ENCODE measurements at regions of chr14 and their contacts with region 1.

Region 1: GRCh38 chr14:68283378-68284123 is 464.0 kb downstream of the RAD51B start:
- DNase-seq: peak; percentile 66
- ATAC-seq: peak; percentile 28
- H3K4me3 Mint-ChIP-seq: no peak overlapping the region
- H3K27ac Mint-ChIP-seq: peak overlapping the region; percentile 72
- H3K4me1 Mint-ChIP-seq: peaks cover 86% of the 10 kb centered on the region
- H3K27me3 Mint-ChIP-seq: no peaks in the 10 kb centered on the region

Region 2: GRCh38 chr14:67933266-67933665 is 350.3 kb before region 1 on chr14:
- CTCF ChIA-PET with region 1: no interaction called
- POLR2A ChIA-PET with region 1: no interaction called
- intact Hi-C with region 1: no loop called
- DNase-seq: no peak
- ATAC-seq: no peak
- H3K4me3 Mint-ChIP-seq: no peak overlapping the region
- H3K27ac Mint-ChIP-seq: no peak overlapping the region
- H3K4me1 Mint-ChIP-seq: peaks cover 5% of the 10 kb centered on the region
- H3K27me3 Mint-ChIP-seq: no peaks in the 10 kb centered on the region

Region 3: DNA sequence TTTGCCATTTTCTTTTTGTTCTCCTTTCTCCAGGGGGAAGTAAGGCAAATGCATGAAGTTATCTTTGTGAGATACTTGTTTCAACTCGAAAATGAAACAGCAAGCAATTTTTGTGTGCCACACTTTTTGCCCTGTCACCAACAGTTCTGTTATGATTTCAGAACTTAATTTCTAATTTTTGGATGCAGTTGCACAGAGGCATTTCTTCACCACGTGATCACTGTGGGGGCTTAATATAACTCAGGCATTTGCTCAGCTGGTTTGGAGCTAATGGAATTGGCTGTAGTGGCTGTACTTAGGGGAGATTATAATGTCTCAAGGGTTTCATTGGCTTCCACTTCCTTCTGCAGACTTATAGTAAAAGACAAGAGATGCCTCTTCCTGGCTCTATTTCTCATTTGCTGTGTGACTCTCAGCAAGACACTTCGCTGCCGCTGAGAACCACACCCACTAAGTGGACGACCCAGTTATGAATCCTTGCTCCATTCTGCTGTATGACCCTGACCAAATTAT is 11.6 kb before region 1 on chr14:
- CTCF ChIA-PET with region 1: interaction called, 7 read pairs
- POLR2A ChIA-PET with region 1: interaction called, 3 read pairs
- intact Hi-C with region 1: loop called in 1 of 2 experiments (anchors 1 kb)
- DNase-seq: no peak
- ATAC-seq: no peak
- H3K4me3 Mint-ChIP-seq: no peak overlapping the region
- H3K27ac Mint-ChIP-seq: no peak overlapping the region
- H3K4me1 Mint-ChIP-seq: peaks cover 63% of the 10 kb centered on the region
- H3K27me3 Mint-ChIP-seq: no peaks in the 10 kb centered on the region

Region 4: DNA sequence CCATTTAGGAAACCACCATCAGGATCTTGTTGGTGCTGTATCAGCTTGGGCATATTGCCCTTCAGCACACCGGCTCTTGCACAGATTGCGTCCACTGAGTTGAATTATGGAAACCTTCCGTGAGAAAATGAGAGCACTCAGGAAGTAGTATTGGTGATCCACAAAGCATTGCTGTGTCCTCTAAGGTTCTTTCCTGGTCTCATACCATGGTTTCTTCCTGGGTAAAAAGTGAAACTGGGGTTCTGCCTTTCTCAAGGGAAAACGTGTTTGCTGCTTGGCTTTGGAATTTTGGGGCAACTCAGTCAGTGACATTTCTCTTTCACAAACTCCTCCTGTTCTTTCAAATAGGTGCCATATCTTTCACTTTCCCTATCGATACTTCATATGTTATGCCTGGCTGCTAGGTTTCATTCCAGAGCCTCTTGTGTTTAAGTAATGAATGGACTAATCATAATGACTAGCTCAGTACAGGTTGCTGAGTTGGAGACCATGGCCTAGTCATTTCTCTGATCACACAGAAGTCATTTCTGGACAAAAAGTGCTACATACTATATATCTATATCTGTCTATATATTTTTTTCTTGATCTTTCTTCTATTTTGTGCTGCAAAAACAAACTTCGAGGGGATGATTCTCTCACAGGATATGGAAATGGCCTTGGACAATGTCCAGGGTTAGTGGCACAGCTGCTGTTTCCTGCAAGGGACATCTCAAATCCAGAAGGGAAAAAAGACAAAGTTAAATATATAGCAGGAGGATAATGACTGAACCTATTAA is 85.9 kb after region 1 on chr14:
- CTCF ChIA-PET with region 1: no interaction called
- POLR2A ChIA-PET with region 1: interaction called, 3 read pairs
- intact Hi-C with region 1: loop called in 1 of 2 experiments (anchors 5 kb)
- DNase-seq: peak; percentile 20
- ATAC-seq: peak; percentile 94
- H3K4me3 Mint-ChIP-seq: no peak overlapping the region
- H3K27ac Mint-ChIP-seq: peak overlapping the region; percentile 55
- H3K4me1 Mint-ChIP-seq: peaks cover 46% of the 10 kb centered on the region
- H3K27me3 Mint-ChIP-seq: no peaks in the 10 kb centered on the region

Region 5: GRCh38 chr14:68506021-68506644 is 222.6 kb after region 1 on chr14:
- CTCF ChIA-PET with region 1: interaction called, 3 read pairs
- POLR2A ChIA-PET with region 1: no interaction called
- intact Hi-C with region 1: loop called in 1 of 2 experiments (anchors 10 kb)
- DNase-seq: no peak
- ATAC-seq: peak; percentile 22
- H3K4me3 Mint-ChIP-seq: peak overlapping the region; percentile 39
- H3K27ac Mint-ChIP-seq: peak overlapping the region; percentile 60
- H3K4me1 Mint-ChIP-seq: peaks cover 51% of the 10 kb centered on the region
- H3K27me3 Mint-ChIP-seq: no peaks in the 10 kb centered on the region